ENCODE measurements at regions of chr3 and their contacts with region 1.

Region 1: GRCh38 chr3:31908391-31909097 is 72.5 kb downstream of the OSBPL10 start:
- DNase-seq: peak; percentile 74
- H3K4me3 ChIP-seq: no peak overlapping the region
- H3K27ac ChIP-seq: no peak overlapping the region
- H3K4me1 ChIP-seq: peaks cover 28% of the 10 kb centered on the region
- H3K27me3 ChIP-seq: no peaks in the 10 kb centered on the region
- CTCF ChIP-seq: peak in 1 of 2 donors; percentile 4
- POLR2A ChIP-seq: no peak

Region 2: DNA sequence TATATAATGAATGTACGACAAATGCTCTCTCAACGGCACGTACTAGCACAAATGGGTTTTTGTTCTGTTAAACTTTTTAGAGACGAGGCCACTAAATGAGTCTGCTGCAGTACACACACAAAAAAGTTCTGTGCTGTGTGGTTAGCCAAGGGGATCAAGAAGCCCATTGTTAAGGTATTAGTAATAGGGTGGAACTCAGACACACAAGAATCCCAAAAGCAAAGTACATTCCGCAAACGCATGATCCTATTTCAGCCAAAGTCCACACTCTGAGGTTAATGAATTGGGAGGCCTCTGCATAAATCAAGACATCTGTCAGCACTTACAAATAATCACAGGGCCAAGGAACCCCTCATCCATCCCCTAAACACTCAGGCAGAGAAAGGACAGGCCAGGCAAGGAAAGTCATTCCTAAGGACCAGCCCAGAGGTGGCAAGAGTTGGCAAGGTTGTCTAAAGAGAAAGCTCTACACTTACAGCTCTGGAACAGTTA is 60.4 kb after region 1 on chr3:
- CTCF ChIA-PET with region 1: interaction called, 3 read pairs
- POLR2A ChIA-PET with region 1: no interaction called
- dilution Hi-C with region 1: no loop called
- intact Hi-C with region 1: loop called (anchors 1 kb)
- DNase-seq: peak; percentile 57
- H3K4me3 ChIP-seq: peak overlapping the region in 1 of 3 experiments; percentile 24
- H3K27ac ChIP-seq: peak overlapping the region; percentile 62
- H3K4me1 ChIP-seq: peaks cover 37% of the 10 kb centered on the region
- H3K27me3 ChIP-seq: no peaks in the 10 kb centered on the region
- CTCF ChIP-seq: no peak
- POLR2A ChIP-seq: no peak

Measured in endothelial cell of umbilical vein (primary cell).